PC-9 (cell line): ENCODE measurements at regions of chr2 and their contacts with region 1.

Region 1: GRCh38 chr2:190863946-190864345 is 16.7 kb upstream of the GLS start:
- DNase-seq: no peak
- H3K4me3 ChIP-seq: no peak overlapping the region
- H3K27ac ChIP-seq: no peak overlapping the region
- H3K4me1 ChIP-seq: peaks cover 22% of the 10 kb centered on the region
- H3K27me3 ChIP-seq: no peaks in the 10 kb centered on the region
- CTCF ChIP-seq: no peak

Region 2: GRCh38 chr2:190599073-190599472 is 264.9 kb before region 1 on chr2:
- CTCF ChIA-PET with region 1: no interaction called
- POLR2A ChIA-PET with region 1: no interaction called
- intact Hi-C with region 1: no loop called
- DNase-seq: no peak
- H3K4me3 ChIP-seq: no peak overlapping the region
- H3K27ac ChIP-seq: no peak overlapping the region
- H3K4me1 ChIP-seq: no peaks in the 10 kb centered on the region
- H3K27me3 ChIP-seq: no peaks in the 10 kb centered on the region
- CTCF ChIP-seq: no peak

Region 3: DNA sequence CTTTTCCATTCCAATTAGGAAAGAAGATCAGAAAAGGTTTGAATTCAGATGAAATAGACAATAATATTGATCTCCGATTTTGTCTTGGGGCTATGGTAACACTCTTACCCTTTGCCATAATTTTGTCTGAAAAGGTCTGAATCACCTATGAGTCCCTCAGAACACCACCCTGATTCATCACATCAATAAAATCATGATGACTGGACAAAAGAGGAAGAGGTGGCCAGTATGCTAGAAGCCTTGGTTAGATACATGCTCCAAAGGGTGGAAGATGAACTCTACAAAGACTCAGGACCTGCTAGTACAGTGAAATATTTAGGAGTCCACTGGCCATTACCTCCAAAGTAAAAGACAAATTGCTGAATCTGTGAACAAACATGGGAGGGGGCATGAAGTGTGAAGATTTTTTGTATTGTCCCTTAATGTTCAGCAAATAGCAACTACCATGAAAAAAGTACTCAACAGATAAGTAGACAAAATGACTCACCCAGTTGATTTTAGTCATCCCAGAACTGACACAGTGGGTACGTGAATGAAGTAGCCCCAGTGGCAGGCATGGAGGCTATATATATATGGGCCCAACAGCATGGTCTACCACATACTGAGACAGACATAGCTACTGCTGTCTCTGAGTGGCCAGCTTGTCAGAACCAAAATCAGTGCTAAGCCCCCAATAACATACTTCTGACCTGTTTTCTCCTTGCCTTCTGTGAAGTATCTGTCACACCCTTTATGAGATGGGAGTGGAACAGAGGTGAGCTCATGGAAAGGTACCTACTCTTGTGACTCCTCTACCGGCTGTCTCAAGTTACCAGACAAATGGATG is 19.9 kb before region 1 on chr2:
- CTCF ChIA-PET with region 1: interaction called, 10 read pairs
- POLR2A ChIA-PET with region 1: no interaction called
- intact Hi-C with region 1: no loop called
- DNase-seq: peak; percentile 35 to 90
- H3K4me3 ChIP-seq: peak overlapping the region; percentile 55; the same call in 1 of the 2 replicates
- H3K27ac ChIP-seq: peak overlapping the region; percentile 100
- H3K4me1 ChIP-seq: peaks cover 87% of the 10 kb centered on the region
- H3K27me3 ChIP-seq: no peaks in the 10 kb centered on the region
- CTCF ChIP-seq: no peak